ENCODE measurements at regions of chr6 and their contacts with region 1.

Region 1: DNA sequence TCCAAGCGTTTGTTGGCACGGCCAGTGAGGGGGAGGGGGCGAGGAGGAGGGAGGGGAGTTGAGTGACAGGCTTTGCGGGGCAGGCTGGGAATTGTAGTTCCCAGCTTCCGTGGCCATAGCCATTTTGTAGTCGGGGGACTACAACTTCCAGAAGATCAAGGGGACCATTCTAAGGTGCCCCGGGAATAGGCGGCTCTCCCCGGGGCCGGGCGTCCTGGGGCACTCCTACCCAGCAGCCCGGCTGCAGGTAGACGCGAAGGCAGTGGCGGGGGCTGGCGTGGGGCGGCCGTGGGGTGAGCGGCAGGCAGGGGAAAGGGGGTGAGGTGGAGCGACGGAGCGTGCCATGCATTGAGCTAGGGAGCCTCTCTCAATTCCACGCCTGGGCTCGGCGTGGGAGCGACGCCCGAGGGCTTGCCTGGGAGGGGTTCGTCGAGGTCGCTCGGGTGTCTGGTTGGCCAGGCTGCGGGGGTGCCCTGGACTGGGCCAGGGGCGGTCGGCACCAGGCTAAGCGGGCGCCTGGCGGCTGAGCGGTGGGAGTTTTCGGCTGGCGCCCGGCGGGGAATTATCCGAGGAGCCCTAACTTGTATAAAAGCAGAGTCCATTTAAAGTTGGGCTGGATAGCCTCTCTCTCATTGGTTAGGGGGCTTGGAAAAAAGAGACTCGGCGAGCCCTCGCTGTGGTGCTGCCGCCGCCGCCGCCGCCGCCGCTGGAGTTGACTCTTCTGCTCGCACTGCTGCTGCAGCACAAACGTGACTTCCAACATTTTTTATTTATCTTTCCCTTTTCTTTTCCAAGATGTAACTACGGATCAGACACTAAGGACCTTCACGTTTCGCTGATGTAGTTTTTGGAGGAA is at the start of gene JARID2:
- DNase-seq: peak; percentile 93
- H3K4me3 Mint-ChIP-seq: peak within 1 kb of the TSS; percentile 99
- H3K27ac Mint-ChIP-seq: peak within 1 kb of the TSS; percentile 99
- H3K4me1 Mint-ChIP-seq: peaks cover 30% of the 10 kb centered on the region
- H3K27me3 Mint-ChIP-seq: no peaks in the 10 kb centered on the region
- total RNA-seq, gene JARID2: 55.9 and 57.7 TPM in 2 replicates

Region 2: DNA sequence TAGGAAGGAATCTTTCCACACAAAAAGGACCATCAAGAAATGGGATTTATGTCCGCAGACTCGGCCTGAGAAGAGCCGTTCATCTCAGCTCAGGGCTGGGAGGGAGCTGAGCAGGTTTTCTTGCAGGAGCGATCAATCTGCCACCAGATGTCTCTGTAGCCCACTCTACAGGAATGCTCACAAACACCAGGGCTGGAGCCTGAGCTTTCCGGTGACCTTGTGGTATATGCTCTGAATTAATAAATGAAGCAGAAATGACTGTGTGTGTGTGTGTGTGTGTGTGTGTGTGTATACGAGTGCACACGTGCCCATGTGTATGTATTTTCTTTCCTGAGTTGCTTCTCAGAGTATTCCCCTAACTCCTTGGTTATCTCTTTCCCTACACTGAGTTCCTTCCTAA is 1116.0 kb before region 1 on chr6:
- intact Hi-C with region 1: loop called (anchors 10 kb)
- DNase-seq: no peak
- H3K4me3 Mint-ChIP-seq: no peak overlapping the region
- H3K27ac Mint-ChIP-seq: peak overlapping the region; percentile 52
- H3K4me1 Mint-ChIP-seq: peaks cover 51% of the 10 kb centered on the region
- H3K27me3 Mint-ChIP-seq: no peaks in the 10 kb centered on the region

Region 3: GRCh38 chr6:14276667-14277404 is 968.8 kb before region 1 on chr6:
- intact Hi-C with region 1: loop called (anchors 10 kb)
- DNase-seq: peak; percentile 35
- H3K4me3 Mint-ChIP-seq: peak overlapping the region; percentile 22
- H3K27ac Mint-ChIP-seq: peak overlapping the region; percentile 92
- H3K4me1 Mint-ChIP-seq: peaks cover 49% of the 10 kb centered on the region
- H3K27me3 Mint-ChIP-seq: no peaks in the 10 kb centered on the region

Region 4: GRCh38 chr6:14743465-14744211 is 502.0 kb before region 1 on chr6:
- intact Hi-C with region 1: loop called (anchors 2 kb)
- DNase-seq: peak; percentile 73
- H3K4me3 Mint-ChIP-seq: peak overlapping the region; percentile 61
- H3K27ac Mint-ChIP-seq: peak overlapping the region; percentile 100
- H3K4me1 Mint-ChIP-seq: peaks cover 79% of the 10 kb centered on the region
- H3K27me3 Mint-ChIP-seq: no peaks in the 10 kb centered on the region

Region 5: DNA sequence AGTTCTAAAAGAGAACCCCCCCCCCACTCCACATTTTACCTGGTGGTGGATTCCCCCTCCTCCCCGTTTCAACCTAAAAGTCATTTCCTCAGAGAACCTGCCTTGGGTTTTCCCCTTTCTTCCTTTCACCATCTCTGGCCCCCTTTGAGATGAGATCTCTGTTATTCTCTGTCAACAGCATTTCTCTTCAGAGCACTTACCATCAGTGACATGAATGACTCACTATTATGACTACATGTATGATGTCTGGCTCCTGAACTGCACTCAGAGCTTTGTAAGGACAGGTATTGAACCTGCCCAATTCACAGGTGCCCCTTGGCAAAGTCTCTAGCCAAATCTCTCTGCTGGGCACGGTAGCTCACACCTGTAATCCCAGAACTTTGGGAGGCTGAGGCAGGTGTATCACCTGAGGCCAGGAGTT is 61.1 kb before region 1 on chr6:
- intact Hi-C with region 1: loop called (anchors 1 kb)
- DNase-seq: no peak
- H3K4me3 Mint-ChIP-seq: no peak overlapping the region
- H3K27ac Mint-ChIP-seq: peak overlapping the region; percentile 90
- H3K4me1 Mint-ChIP-seq: peaks cover 12% of the 10 kb centered on the region
- H3K27me3 Mint-ChIP-seq: no peaks in the 10 kb centered on the region

Region 6: GRCh38 chr6:15439410-15440025 is 193.9 kb after region 1 on chr6:
- intact Hi-C with region 1: loop called (anchors 5 kb)
- DNase-seq: no peak
- H3K4me3 Mint-ChIP-seq: peak overlapping the region; percentile 7
- H3K27ac Mint-ChIP-seq: peak overlapping the region; percentile 71
- H3K4me1 Mint-ChIP-seq: peaks cover 74% of the 10 kb centered on the region
- H3K27me3 Mint-ChIP-seq: no peaks in the 10 kb centered on the region